WTC11 (cell line): ENCODE measurements at regions of chr1 and their contacts with region 1.

Region 1: DNA sequence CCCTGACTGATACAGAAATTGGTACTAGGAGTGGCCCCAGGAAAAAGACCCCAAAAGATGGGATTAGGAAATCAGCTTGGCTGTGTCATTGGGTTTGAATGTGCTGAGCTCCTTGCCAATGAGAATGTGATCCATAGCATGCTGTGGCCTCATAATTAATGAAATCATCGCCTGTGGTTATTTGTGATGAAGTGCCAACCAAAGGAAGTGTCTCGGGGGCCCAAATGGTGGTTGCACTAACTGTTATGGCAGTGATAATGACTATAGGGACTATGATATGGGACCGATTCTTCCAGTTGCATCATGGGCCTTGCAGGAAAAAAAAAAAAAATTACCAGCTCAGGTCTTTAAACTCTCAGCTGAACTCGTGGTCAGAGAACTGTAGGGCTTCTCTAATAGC is 15.4 kb upstream of the ZDHHC18 start:
- DNase-seq: no peak
- ATAC-seq: no peak
- H3K4me3 Mint-ChIP-seq: no peak overlapping the region
- H3K27ac Mint-ChIP-seq: no peak overlapping the region
- H3K4me1 Mint-ChIP-seq: no peaks in the 10 kb centered on the region
- H3K27me3 Mint-ChIP-seq: no peaks in the 10 kb centered on the region; the same call in 1 of the 2 replicates
- CTCF ChIP-seq: no peak

Region 2: DNA sequence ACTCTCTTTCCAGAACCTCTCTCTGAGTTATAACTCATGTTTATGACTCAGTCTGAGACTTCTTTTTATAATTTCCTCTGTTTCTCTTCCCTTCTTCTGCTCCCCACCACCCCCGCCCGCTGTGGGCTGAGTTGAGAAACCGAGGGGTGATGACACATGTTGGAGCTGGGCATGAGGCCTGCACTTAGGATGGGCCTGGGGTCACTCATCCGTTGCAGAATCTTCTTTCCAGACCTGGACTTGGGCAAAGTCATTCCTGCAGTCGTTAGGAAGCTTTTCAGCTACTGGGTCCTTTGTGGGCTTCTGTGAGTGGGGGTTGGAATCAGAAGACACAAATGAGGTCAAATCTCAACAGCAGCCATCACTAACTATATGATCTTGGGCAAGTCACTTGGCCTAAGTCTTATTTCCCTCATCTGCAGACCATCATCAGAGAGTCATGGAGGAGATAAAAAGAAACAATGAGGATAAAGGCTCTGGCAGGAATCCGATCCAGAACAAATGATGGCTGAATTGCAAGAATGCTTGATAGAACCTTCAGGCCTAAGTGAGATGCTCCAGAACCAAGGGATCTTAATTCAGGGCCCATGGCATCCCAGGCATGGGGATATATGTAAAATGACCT is 228.1 kb before region 1 on chr1:
- CTCF ChIA-PET with region 1: interaction called, 11 read pairs
- POLR2A ChIA-PET with region 1: no interaction called
- DNase-seq: no peak
- ATAC-seq: no peak
- H3K4me3 Mint-ChIP-seq: no peak overlapping the region
- H3K27ac Mint-ChIP-seq: no peak overlapping the region
- H3K4me1 Mint-ChIP-seq: no peaks in the 10 kb centered on the region
- H3K27me3 Mint-ChIP-seq: no peaks in the 10 kb centered on the region
- CTCF ChIP-seq: no peak

Region 3: DNA sequence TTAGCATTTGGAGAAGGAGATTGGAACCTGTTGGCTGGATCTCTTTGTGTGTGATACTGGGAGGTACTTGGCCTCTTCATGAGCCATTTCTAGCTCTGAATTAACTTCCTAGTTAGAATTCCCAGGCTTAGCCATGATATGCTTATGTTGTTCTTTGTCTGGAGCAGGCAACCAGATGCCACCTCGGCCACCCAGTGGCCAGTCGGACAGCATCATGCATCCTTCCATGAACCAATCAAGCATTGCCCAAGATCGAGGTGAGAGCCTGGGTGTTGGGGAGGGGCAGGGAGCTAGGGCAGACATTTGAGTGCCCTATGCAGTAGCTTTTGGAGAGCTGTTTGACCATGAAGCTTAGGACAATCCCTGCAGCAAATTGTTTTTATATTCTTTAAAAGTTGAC is 49.8 kb before region 1 on chr1:
- CTCF ChIA-PET with region 1: no interaction called
- POLR2A ChIA-PET with region 1: no interaction called
- DNase-seq: no peak
- ATAC-seq: no peak; the same call in 1 of the 2 replicates
- H3K4me3 Mint-ChIP-seq: no peak overlapping the region
- H3K27ac Mint-ChIP-seq: no peak overlapping the region
- H3K4me1 Mint-ChIP-seq: peaks cover 5% of the 10 kb centered on the region
- H3K27me3 Mint-ChIP-seq: no peaks in the 10 kb centered on the region
- CTCF ChIP-seq: no peak

Region 4: DNA sequence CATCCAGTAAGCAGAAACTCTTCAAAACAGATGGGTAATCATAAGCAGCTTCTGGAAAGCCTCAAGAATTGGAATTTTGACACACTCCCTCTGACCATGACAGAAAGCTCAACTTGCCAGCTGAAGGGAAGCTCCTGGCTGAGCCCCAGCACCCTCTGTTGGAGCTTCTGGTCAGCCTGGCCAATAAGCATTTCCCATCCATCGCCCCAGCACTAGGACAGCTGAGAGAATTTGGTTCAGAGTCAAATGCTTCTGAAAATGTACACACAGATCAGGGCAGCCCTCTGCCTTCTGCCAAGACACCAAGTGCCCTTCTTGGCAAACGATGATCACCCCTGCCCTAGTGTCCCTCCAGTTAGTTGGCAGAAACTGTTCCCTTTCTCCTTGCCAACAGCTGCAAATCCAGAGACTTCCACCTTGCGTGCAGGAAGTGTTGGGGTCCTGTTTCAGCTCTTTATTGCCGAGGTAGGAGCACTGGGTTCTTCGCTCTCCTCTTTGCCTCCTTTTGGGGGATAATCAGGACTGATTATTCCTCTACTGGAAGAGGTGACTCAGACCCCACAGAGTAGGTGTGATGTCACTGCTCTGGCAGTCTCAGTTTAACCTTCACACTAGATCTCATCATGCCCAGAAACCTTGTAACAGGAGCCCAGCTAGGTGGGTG is 11.4 kb before region 1 on chr1:
- CTCF ChIA-PET with region 1: interaction called, 19 read pairs
- POLR2A ChIA-PET with region 1: no interaction called
- DNase-seq: no peak
- ATAC-seq: peak; percentile 54
- H3K4me3 Mint-ChIP-seq: no peak overlapping the region
- H3K27ac Mint-ChIP-seq: peak overlapping the region; percentile 79
- H3K4me1 Mint-ChIP-seq: peaks cover 19% of the 10 kb centered on the region
- H3K27me3 Mint-ChIP-seq: 0 out of 2 replicates have a peak, but pooled peaks cover 3% of the 10 kb centered on the region
- CTCF ChIP-seq: no peak

Region 5: GRCh38 chr1:26882696-26883463 is 71.8 kb after region 1 on chr1:
- CTCF ChIA-PET with region 1: interaction called, 10 read pairs
- POLR2A ChIA-PET with region 1: no interaction called
- DNase-seq: no peak
- ATAC-seq: no peak
- H3K4me3 Mint-ChIP-seq: no peak overlapping the region
- H3K27ac Mint-ChIP-seq: no peak overlapping the region
- H3K4me1 Mint-ChIP-seq: no peaks in the 10 kb centered on the region
- H3K27me3 Mint-ChIP-seq: no peaks in the 10 kb centered on the region
- CTCF ChIP-seq: no peak

Region 6: DNA sequence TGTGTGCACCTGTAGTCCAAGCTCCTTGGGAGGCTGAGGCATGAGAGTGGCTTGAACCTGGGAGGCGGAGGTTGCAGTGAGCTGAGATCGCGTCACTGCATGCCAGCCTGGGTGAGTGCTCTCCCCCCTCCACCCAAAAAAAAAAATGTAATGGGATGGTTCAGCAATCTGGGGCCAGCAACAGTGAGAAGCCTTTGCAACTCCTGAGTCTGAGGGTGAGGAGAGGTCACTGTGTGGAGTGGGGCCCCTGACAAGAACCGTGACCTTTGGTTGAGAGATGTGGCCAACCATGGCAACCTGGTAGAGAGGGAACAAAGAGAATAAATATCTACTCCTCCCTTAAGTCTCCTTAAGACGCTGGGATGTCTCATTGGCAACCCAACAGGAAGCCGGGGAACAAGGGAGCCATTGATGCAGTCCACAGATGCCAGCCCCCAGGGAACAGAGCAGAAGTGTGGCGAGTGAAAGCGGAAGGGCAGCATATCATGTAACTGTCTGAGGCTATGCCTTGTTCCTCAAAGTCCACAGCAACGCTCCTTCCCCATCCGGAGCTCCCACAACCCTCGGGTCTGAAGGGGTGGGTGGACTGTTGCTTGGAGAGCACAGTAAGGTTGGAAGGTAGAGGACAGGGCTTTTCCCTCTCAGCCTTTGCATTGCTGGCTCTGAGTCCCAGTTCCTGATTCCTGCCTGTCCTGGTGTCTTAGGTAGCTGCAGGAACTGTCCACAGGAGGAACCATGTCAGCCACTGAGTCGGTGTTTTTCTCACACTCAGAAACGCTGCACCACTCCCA is 190.7 kb after region 1 on chr1:
- CTCF ChIA-PET with region 1: no interaction called
- POLR2A ChIA-PET with region 1: no interaction called
- DNase-seq: no peak
- ATAC-seq: no peak
- H3K4me3 Mint-ChIP-seq: no peak overlapping the region
- H3K27ac Mint-ChIP-seq: peak overlapping the region; percentile 97
- H3K4me1 Mint-ChIP-seq: peaks cover 93% of the 10 kb centered on the region
- H3K27me3 Mint-ChIP-seq: no peaks in the 10 kb centered on the region
- CTCF ChIP-seq: no peak